Adrenal gland (tissue), 19 donors: ENCODE measurements at regions of chr1 and their contacts with region 1.

Region 1: DNA sequence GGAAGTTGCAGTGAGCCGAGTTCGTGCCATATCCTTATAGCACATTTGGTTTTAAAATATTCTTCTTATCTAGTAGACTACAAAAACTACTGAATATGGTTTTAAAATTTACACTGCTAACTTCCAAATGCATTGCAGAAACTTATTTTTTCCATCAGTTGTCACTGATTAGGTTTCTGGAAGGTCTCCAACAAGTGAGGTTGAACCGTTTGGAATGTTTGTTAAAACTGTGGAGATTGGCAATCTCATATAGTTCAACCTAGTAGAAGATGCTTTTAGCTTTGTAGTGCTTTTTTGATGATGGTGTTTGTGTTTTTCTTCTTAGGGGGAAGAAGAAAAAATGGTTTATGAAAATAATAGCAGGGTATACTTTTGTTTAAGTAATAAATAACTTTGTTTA is 12.9 kb downstream of the CENPF start:
- DNase-seq: no peak
- H3K4me3 ChIP-seq: no peak overlapping the region
- H3K27ac ChIP-seq: no peak overlapping the region
- H3K4me1 ChIP-seq: no peaks in the 10 kb centered on the region
- H3K27me3 ChIP-seq: no peaks in the 10 kb centered on the region
- CTCF ChIP-seq: no peak
- POLR2A ChIP-seq: no peak

Region 2: GRCh38 chr1:214261206-214262123 is 354.4 kb before region 1 on chr1:
- intact Hi-C with region 1: loop called in 1 of 2 experiments (anchors 10 kb)
- DNase-seq: peak; percentile 72 to 95 (median 86)
- H3K4me3 ChIP-seq: no peak overlapping the region
- H3K27ac ChIP-seq: peak overlapping the region in 1 of 5 donors; percentile 32
- H3K4me1 ChIP-seq: no peaks in the 10 kb centered on the region
- H3K27me3 ChIP-seq: peaks cover 31% of the 10 kb centered on the region
- CTCF ChIP-seq: peak; percentile 79 to 97 (median 89)
- POLR2A ChIP-seq: no peak